ENCODE measurements at regions of chr10 and their contacts with region 1.

Region 1: GRCh38 chr10:5813287-5814109 is at the start of gene GDI2:
- DNase-seq: peak; percentile 96
- H3K4me3 ChIP-seq: peak within 1 kb of the TSS; percentile 91 to 100 (median 97)
- H3K27ac ChIP-seq: peak within 1 kb of the TSS; percentile 92
- H3K4me1 ChIP-seq: peaks cover 35% of the 10 kb centered on the region
- H3K27me3 ChIP-seq: no peaks in the 10 kb centered on the region
- CTCF ChIP-seq: no peak
- POLR2A ChIP-seq: peak; percentile 96
- total RNA-seq, gene GDI2: 266 and 307 TPM in 2 replicates

Region 2: GRCh38 chr10:5684318-5684970 is 129.1 kb before region 1 on chr10 and contains the start of gene TASOR2:
- CTCF ChIA-PET with region 1: no interaction called
- POLR2A ChIA-PET with region 1: no interaction called
- dilution Hi-C with region 1: no loop called
- intact Hi-C with region 1: loop called (anchors 2 kb)
- DNase-seq: peak; percentile 99
- H3K4me3 ChIP-seq: peak within 1 kb of the TSS; percentile 62 to 97 (median 89)
- H3K27ac ChIP-seq: peak within 1 kb of the TSS; percentile 68
- H3K4me1 ChIP-seq: peaks cover 9% of the 10 kb centered on the region
- H3K27me3 ChIP-seq: peaks cover 6 to 17% of the 10 kb centered on the region in 2 experiments
- CTCF ChIP-seq: no peak
- POLR2A ChIP-seq: peak; percentile 60
- total RNA-seq, gene TASOR2: 48.9 and 49.9 TPM in 2 replicates

Region 3: DNA sequence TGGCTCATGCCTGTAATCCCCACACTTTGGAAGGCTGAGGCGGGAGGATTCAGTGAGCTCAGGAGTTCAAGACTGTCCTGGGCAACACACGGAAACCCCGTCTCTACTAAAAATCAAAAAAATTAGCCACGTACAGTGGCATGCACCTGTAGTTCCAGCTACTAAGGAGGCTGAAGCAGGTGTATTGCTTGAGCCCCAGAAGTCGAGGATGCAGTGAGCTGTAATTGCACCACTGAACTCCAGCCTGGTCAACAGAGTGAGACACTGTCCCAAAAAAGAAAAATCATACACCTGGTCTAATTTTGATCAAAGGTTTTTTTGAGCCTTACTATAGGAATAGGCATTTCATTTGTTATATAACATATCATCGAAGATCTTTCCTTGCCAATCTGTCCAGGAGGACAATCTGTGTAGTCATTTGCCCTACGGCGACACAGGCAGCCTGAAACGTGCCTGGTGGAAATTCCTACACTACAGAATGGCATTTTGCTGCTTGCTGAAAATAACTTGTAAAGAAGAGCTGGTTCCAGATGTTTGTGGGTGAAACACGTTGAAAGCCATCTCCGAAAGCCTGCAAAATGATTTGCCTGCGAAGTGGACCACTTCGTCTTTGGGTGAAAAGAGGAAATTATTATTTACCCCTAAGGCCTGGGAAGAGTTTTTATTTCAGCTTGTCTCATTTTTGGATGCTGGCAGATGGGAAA is 31.0 kb after region 1 on chr10:
- CTCF ChIA-PET with region 1: no interaction called
- POLR2A ChIA-PET with region 1: interaction called, 3 read pairs
- dilution Hi-C with region 1: no loop called
- intact Hi-C with region 1: loop called (anchors 1 kb)
- DNase-seq: no peak
- H3K4me3 ChIP-seq: no peak overlapping the region
- H3K27ac ChIP-seq: no peak overlapping the region
- H3K4me1 ChIP-seq: peaks cover 8% of the 10 kb centered on the region
- H3K27me3 ChIP-seq: no peaks in the 10 kb centered on the region
- CTCF ChIP-seq: no peak
- POLR2A ChIP-seq: no peak

Region 4: DNA sequence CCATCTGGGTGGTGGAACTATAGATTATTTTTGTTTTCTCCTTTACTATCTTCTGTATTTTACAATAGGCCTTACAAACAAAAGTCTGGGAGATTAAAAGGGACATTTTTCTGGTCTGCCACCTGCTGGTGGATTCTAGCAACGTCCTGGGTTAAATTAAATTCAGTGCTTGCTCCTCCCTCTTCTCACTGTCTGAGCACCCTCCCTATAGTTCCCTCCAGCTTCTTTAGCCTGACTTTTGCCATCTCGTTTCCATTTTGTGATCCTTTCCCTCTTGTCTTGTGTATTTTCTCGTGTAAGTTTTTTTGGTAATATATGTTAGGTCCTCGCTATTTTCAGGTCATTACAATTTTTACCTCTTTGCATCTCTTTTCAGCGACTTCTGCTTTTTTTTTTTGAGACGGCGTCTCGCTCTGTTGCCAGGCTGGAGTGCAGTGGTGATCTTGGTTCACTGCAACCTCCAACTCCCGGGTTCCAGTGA is 60.1 kb after region 1 on chr10:
- CTCF ChIA-PET with region 1: interaction called, 19 read pairs
- POLR2A ChIA-PET with region 1: interaction called, 3 read pairs
- dilution Hi-C with region 1: no loop called
- intact Hi-C with region 1: loop called (anchors 1 kb)
- DNase-seq: peak; percentile 85
- H3K4me3 ChIP-seq: no peak overlapping the region
- H3K27ac ChIP-seq: no peak overlapping the region
- H3K4me1 ChIP-seq: no peaks in the 10 kb centered on the region
- H3K27me3 ChIP-seq: no peaks in the 10 kb centered on the region
- CTCF ChIP-seq: peak; percentile 55 to 62
- POLR2A ChIP-seq: no peak

Region 5: GRCh38 chr10:5889624-5890451 is 76.3 kb after region 1 on chr10 and contains the starts of genes ANKRD16 and FBH1:
- CTCF ChIA-PET with region 1: interaction called, 6 read pairs
- POLR2A ChIA-PET with region 1: interaction called, 9 read pairs
- dilution Hi-C with region 1: no loop called
- intact Hi-C with region 1: loop called (anchors 1 kb)
- DNase-seq: peak; percentile 99
- H3K4me3 ChIP-seq: peak within 1 kb of the TSS; percentile 16 to 95 (median 62)
- H3K27ac ChIP-seq: peak within 1 kb of the TSS; percentile 44
- H3K4me1 ChIP-seq: peaks cover 36% of the 10 kb centered on the region
- H3K27me3 ChIP-seq: no peaks in the 10 kb centered on the region
- CTCF ChIP-seq: no peak
- POLR2A ChIP-seq: peak; percentile 82
- total RNA-seq, gene ANKRD16: 4.4 and 6.9 TPM in 2 replicates
- total RNA-seq, gene FBH1: 86.1 and 97.0 TPM in 2 replicates

Region 6: GRCh38 chr10:5977471-5978229 is 164.2 kb after region 1 on chr10 and contains the start of gene IL15RA:
- CTCF ChIA-PET with region 1: no interaction called
- POLR2A ChIA-PET with region 1: no interaction called
- dilution Hi-C with region 1: no loop called
- intact Hi-C with region 1: loop called (anchors 10 kb)
- DNase-seq: peak; percentile 82
- H3K4me3 ChIP-seq: peak within 1 kb of the TSS; percentile 10 to 98 (median 47)
- H3K27ac ChIP-seq: peak within 1 kb of the TSS; percentile 60
- H3K4me1 ChIP-seq: peaks cover 14% of the 10 kb centered on the region
- H3K27me3 ChIP-seq: peaks cover 0 to 2% of the 10 kb centered on the region in 2 experiments
- CTCF ChIP-seq: peak; percentile 6 to 13
- POLR2A ChIP-seq: no peak
- total RNA-seq, gene IL15RA: 16.1 and 18.8 TPM in 2 replicates